ENCODE measurements at regions of chr16 and their contacts with region 1.

Region 1: GRCh38 chr16:21300309-21301167 is 22.4 kb upstream of the CRYM start:
- DNase-seq: peak; percentile 100
- H3K4me3 ChIP-seq: peak overlapping the region; percentile 57 to 82 (median 68)
- H3K27ac ChIP-seq: peak overlapping the region; percentile 98
- H3K4me1 ChIP-seq: peaks cover 13% of the 10 kb centered on the region
- H3K27me3 ChIP-seq: no peaks in the 10 kb centered on the region
- CTCF ChIP-seq: peak; percentile 85 to 93

Region 2: GRCh38 chr16:21167360-21167759 is 133.2 kb before region 1 on chr16:
- CTCF ChIA-PET with region 1: interaction called, 29 read pairs
- dilution Hi-C with region 1: no loop called
- in situ Hi-C with region 1: loop called in 1 of 2 experiments (anchors 10 kb)
- intact Hi-C with region 1: no loop called
- DNase-seq: peak; percentile 95
- H3K4me3 ChIP-seq: no peak overlapping the region
- H3K27ac ChIP-seq: peak overlapping the region; percentile 32
- H3K4me1 ChIP-seq: peaks cover 6% of the 10 kb centered on the region
- H3K27me3 ChIP-seq: no peaks in the 10 kb centered on the region
- CTCF ChIP-seq: no peak

Region 3: DNA sequence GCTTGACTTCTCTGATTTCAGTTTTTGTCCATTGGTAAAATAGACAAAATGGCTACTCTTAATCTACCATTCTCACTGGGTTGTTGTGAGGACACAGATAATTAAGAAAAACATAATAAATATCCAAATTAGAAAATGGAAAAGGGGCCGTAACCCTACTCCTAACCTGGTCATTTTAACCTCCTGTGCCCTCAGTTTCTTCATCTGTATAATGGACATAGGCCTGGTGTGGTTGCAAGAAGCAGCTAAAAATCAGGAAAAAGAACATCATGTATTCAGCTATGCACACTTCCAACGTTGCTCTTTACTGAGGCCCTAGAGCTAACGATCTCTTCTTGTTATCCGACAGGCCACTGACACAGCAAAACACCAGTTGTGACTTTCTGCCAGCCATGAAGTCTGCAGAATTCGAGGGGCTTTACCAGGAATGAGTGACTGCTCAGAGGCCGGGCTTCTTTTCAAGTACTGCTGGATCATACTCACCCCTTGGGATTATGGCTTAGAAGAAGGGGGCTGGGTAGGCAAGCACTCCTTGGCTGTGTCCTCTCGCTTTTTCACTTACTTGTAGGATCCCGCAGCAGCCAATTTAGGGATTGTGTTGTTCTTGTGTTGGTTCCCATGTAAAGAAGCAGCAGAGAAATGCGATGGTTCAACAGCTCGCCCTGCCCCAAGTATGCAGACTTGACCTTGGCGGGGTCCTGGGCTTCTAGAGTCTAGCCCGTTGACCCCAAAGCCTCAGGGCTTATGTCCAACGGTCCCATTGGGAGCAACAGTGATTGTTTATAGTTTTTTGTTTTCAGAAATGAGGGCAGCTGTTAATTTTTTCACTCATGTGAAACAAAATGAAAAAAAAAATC is 121.2 kb before region 1 on chr16:
- CTCF ChIA-PET with region 1: no interaction called
- dilution Hi-C with region 1: no loop called
- in situ Hi-C with region 1: loop called in 1 of 2 experiments (anchors 10 kb)
- intact Hi-C with region 1: no loop called
- DNase-seq: no peak
- H3K4me3 ChIP-seq: no peak overlapping the region
- H3K27ac ChIP-seq: no peak overlapping the region
- H3K4me1 ChIP-seq: no peaks in the 10 kb centered on the region
- H3K27me3 ChIP-seq: no peaks in the 10 kb centered on the region
- CTCF ChIP-seq: no peak

Measured in mammary epithelial cell (primary cell).